A549 (cell line): ENCODE measurements at regions of chr15 and their contacts with region 1.

Region 1: GRCh38 chr15:67024314-67024997 is 40.9 kb upstream of the SMAD3 start:
- DNase-seq: peak; percentile 88 to 94
- ATAC-seq: peak; percentile 87 to 89
- H3K4me3 ChIP-seq: no peak overlapping the region
- H3K27ac ChIP-seq: peak overlapping the region; percentile 75 to 89
- H3K4me1 ChIP-seq: peaks cover 55% of the 10 kb centered on the region
- CTCF ChIP-seq: no peak
- EP300 ChIP-seq: peak; percentile 68; a peak in 2 of 5 replicates
- POLR2A ChIP-seq: no peak
- RAD21 ChIP-seq: peak; percentile 33 to 55; a peak in 3 of 5 replicates

Region 2: DNA sequence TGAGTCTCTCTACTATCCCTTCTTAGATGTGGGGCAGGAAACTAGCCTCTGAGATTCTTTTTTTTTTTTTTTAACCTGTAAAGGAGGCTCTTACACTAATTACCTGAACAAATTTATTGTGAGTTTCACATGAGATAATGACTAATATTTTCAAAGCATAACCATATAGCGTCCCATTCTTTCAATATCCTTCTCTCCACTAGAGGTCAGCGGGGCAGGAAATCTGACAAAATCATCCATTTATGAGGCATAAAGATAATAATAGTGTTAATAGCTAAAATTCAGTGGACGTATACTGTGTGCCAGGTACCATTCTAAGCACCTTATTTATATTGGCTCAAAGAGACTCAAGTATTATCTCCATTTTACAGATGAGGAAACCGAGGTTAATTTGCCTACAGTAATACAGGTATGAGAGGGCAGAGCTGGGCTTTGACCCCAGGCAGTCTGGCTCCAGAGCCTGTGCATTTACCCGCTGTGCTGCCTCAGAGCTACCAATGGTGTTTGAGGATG is 338.8 kb before region 1 on chr15:
- CTCF ChIA-PET with region 1: no interaction called
- POLR2A ChIA-PET with region 1: no interaction called
- DNase-seq: no peak
- ATAC-seq: peak; percentile 51 to 78; a peak in 4 of 6 replicates
- H3K4me3 ChIP-seq: no peak overlapping the region
- H3K27ac ChIP-seq: no peak overlapping the region
- H3K4me1 ChIP-seq: no peaks in the 10 kb centered on the region
- CTCF ChIP-seq: peak; percentile 58
- EP300 ChIP-seq: no peak
- POLR2A ChIP-seq: no peak
- RAD21 ChIP-seq: peak; percentile 44

Region 3: DNA sequence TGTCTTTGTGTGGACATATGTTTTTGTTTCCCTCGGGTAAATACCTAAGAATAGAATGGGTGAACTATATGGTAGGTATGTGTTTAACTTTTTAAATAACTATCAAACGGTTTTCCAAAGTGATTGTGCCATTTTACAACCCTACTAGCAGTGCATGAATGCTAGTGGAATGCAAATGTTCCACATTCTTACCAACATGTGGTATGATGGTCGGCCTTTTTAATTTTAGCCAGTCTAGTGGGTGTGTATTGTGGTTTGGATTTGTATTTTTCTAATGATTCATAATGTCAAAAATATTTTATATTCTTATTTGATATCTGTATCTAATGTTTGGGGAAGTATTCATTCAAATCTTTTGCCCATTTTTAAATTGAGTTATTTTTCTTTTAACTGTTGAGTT is 27.2 kb before region 1 on chr15:
- CTCF ChIA-PET with region 1: no interaction called
- POLR2A ChIA-PET with region 1: no interaction called
- DNase-seq: no peak
- ATAC-seq: no peak
- H3K4me3 ChIP-seq: no peak overlapping the region
- H3K27ac ChIP-seq: no peak overlapping the region
- H3K4me1 ChIP-seq: peaks cover 7% of the 10 kb centered on the region; the same call in 1 of the 3 replicates
- CTCF ChIP-seq: no peak
- EP300 ChIP-seq: no peak
- POLR2A ChIP-seq: no peak
- RAD21 ChIP-seq: no peak

Region 4: DNA sequence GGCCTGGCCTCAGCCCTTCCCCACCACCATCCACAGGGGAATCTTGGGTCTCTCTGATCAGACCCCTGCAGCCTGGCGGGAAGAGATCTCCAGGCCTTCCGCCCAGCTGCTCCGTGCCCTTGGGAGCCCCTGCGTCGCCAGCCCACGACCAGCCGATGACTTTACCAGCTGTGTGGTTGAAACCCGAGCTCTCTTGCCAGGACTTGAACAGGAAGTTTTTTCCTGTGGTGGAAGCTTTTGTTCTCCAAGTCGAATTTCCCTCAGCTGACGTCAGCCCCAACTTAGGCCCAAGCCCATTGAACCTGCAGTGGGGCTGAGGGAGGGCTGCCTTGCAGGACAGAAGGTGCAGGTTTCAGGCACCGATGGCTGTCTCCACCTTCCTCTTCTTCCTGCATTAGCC is 10.8 kb before region 1 on chr15:
- CTCF ChIA-PET with region 1: interaction called, 24 read pairs
- POLR2A ChIA-PET with region 1: no interaction called
- DNase-seq: no peak
- ATAC-seq: no peak
- H3K4me3 ChIP-seq: no peak overlapping the region
- H3K27ac ChIP-seq: no peak overlapping the region
- H3K4me1 ChIP-seq: peaks cover 12% of the 10 kb centered on the region; the same call in 1 of the 3 replicates
- CTCF ChIP-seq: no peak
- EP300 ChIP-seq: no peak
- POLR2A ChIP-seq: no peak
- RAD21 ChIP-seq: no peak